ENCODE measurements at regions of chr6 and their contacts with region 1.

Region 1: GRCh38 chr6:68778356-68779020 is 143.4 kb downstream of the ADGRB3 start:
- DNase-seq: peak in 4 of 5 donors; percentile 10 to 29 (median 24)
- ATAC-seq: peak in 3 of 4 donors; percentile 70 to 84 (median 71)
- H3K4me3 ChIP-seq: no peak overlapping the region
- H3K27ac ChIP-seq: no peak overlapping the region
- H3K4me1 ChIP-seq: peaks cover 0 to 5% (median 0%) of the 10 kb centered on the region in 12 donors
- H3K27me3 ChIP-seq: no peaks in the 10 kb centered on the region
- CTCF ChIP-seq: peak; percentile 44 to 75 (median 56)
- POLR2A ChIP-seq: no peak

Region 2: DNA sequence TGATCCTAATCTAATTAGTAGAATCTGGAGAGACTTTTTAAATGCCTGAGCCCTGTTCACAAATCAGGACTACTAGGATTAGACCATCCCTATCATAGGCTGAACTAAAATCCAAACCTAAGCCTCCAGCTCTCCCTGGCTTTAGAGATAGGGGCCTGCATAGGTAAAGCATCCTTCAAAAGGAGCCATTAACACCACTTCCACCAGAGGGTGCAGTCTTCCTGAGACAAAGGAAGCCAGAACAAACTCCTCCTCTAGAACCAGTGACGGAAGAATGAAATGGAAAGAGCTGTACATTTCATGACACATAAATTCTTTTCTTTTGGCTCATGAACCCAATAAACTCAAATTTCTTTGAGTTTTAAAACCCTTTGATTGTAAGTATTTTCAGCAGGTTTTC is 434.6 kb before region 1 on chr6:
- intact Hi-C with region 1: loop called in 2 of 10 experiments (anchors 5 kb)
- DNase-seq: no peak
- ATAC-seq: no peak
- H3K4me3 ChIP-seq: no peak overlapping the region
- H3K27ac ChIP-seq: no peak overlapping the region
- H3K4me1 ChIP-seq: no peaks in the 10 kb centered on the region
- H3K27me3 ChIP-seq: no peaks in the 10 kb centered on the region
- CTCF ChIP-seq: peak in 5 of 12 donors; percentile 13 to 40 (median 36)
- POLR2A ChIP-seq: no peak

Region 3: GRCh38 chr6:68639826-68640490 is 138.5 kb before region 1 on chr6:
- intact Hi-C with region 1: loop called (anchors 1 to 5 kb)
- DNase-seq: peak in 1 of 5 donors; percentile 11
- ATAC-seq: peak in 2 of 4 donors; percentile 24 to 44
- H3K4me3 ChIP-seq: peak overlapping the region in 10 of 12 donors; percentile 26 to 52 (median 42)
- H3K27ac ChIP-seq: peak overlapping the region in 11 of 12 donors; percentile 27 to 66 (median 51)
- H3K4me1 ChIP-seq: peaks cover 0 to 10% (median 4%) of the 10 kb centered on the region in 12 donors
- H3K27me3 ChIP-seq: peaks cover 0 to 20% (median 12%) of the 10 kb centered on the region in 9 donors
- CTCF ChIP-seq: no peak
- POLR2A ChIP-seq: no peak